ENCODE measurements at regions of chr4 and their contacts with region 1.

Region 1: GRCh38 chr4:74228691-74229640 is 71.0 kb downstream of the MTHFD2L start:
- DNase-seq: peak; percentile 92
- H3K4me3 Mint-ChIP-seq: no peak overlapping the region
- H3K27ac Mint-ChIP-seq: peak overlapping the region; percentile 51
- H3K4me1 Mint-ChIP-seq: peaks cover 9% of the 10 kb centered on the region
- H3K27me3 Mint-ChIP-seq: no peaks in the 10 kb centered on the region

Region 2: GRCh38 chr4:74166135-74166534 is 62.8 kb before region 1 on chr4:
- intact Hi-C with region 1: no loop called
- DNase-seq: no peak
- H3K4me3 Mint-ChIP-seq: no peak overlapping the region
- H3K27ac Mint-ChIP-seq: no peak overlapping the region
- H3K4me1 Mint-ChIP-seq: peaks cover 10% of the 10 kb centered on the region
- H3K27me3 Mint-ChIP-seq: no peaks in the 10 kb centered on the region

Region 3: GRCh38 chr4:74197080-74197479 is 31.9 kb before region 1 on chr4:
- intact Hi-C with region 1: loop called (anchors 5 kb)
- DNase-seq: no peak
- H3K4me3 Mint-ChIP-seq: no peak overlapping the region
- H3K27ac Mint-ChIP-seq: no peak overlapping the region
- H3K4me1 Mint-ChIP-seq: peaks cover 5% of the 10 kb centered on the region
- H3K27me3 Mint-ChIP-seq: no peaks in the 10 kb centered on the region

Region 4: DNA sequence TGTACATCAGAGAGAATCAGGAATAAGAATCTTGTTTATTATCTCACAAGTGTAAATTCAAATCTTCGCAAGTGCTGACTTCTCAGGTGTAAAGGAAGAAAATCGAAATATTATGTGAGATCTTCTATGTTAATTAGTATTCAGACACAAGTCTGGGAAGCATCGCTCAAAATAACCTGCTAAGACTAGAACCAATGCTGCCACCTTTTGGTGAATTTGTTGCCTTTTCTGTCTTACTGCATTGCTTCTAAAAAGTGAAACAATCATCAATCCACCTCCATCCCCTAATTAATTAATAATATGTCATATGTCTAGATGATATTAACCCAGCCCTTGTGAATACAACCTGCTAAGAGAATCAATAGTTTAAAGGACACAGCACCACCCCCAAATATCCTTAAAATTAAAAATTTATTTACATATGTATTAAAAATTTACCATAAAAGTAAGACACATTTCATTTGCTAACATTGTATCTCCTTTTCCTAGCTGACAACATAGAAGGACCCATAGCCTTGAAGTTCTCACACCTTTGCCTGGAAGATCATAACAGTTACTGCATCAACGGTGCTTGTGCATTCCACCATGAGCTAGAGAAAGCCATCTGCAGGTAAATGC is 82.8 kb after region 1 on chr4:
- intact Hi-C with region 1: loop called (anchors 1 kb)
- DNase-seq: peak; percentile 75
- H3K4me3 Mint-ChIP-seq: no peak overlapping the region
- H3K27ac Mint-ChIP-seq: no peak overlapping the region
- H3K4me1 Mint-ChIP-seq: peaks cover 6% of the 10 kb centered on the region
- H3K27me3 Mint-ChIP-seq: peaks cover 2% of the 10 kb centered on the region

Region 5: DNA sequence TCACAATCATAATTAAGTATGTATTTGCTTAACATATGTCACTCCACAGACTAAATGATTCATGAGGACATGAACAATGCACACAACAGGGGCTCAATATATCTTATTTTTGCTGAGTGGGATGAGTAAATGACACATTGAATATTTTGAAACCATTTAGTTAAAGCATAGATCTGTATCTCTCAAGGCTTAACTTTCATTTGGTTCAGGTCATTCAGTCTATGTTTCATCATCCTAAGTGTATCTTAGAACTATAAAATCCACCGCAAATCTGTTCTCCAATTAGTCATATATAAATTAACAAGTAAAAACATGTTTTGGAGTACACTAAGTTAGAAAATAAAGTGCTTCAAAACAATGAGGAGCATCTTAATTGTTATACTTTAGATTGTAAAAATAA is 261.8 kb after region 1 on chr4:
- intact Hi-C with region 1: no loop called
- DNase-seq: no peak
- H3K4me3 Mint-ChIP-seq: no peak overlapping the region
- H3K27ac Mint-ChIP-seq: no peak overlapping the region
- H3K4me1 Mint-ChIP-seq: no peaks in the 10 kb centered on the region
- H3K27me3 Mint-ChIP-seq: peaks cover 5% of the 10 kb centered on the region